Transverse colon (tissue), 4 donors: ENCODE measurements at regions of chr22 and their contacts with region 1.

Region 1: GRCh38 chr22:17903564-17904295 is 120.6 kb downstream of the MICAL3 start:
- DNase-seq: no peak
- H3K4me3 ChIP-seq: no peak overlapping the region
- H3K27ac ChIP-seq: peak overlapping the region; percentile 6 to 63 (median 26)
- H3K4me1 ChIP-seq: peaks cover 0 to 8% (median 3%) of the 10 kb centered on the region in 4 donors
- H3K27me3 ChIP-seq: no peaks in the 10 kb centered on the region
- CTCF ChIP-seq: peak in 1 of 5 experiments; percentile 27
- EP300 ChIP-seq: no peak
- POLR2A ChIP-seq: no peak

Region 2: GRCh38 chr22:17867160-17867785 is 36.5 kb before region 1 on chr22:
- in situ Hi-C with region 1: no loop called
- intact Hi-C with region 1: no loop called
- DNase-seq: peak; percentile 86
- H3K4me3 ChIP-seq: no peak overlapping the region
- H3K27ac ChIP-seq: peak overlapping the region; percentile 74 to 80 (median 77)
- H3K4me1 ChIP-seq: peaks cover 31 to 59% (median 44%) of the 10 kb centered on the region in 4 donors
- H3K27me3 ChIP-seq: no peaks in the 10 kb centered on the region
- CTCF ChIP-seq: peak in 4 of 5 experiments; percentile 18 to 68 (median 46)
- EP300 ChIP-seq: peak; percentile 40
- POLR2A ChIP-seq: no peak

Region 3: DNA sequence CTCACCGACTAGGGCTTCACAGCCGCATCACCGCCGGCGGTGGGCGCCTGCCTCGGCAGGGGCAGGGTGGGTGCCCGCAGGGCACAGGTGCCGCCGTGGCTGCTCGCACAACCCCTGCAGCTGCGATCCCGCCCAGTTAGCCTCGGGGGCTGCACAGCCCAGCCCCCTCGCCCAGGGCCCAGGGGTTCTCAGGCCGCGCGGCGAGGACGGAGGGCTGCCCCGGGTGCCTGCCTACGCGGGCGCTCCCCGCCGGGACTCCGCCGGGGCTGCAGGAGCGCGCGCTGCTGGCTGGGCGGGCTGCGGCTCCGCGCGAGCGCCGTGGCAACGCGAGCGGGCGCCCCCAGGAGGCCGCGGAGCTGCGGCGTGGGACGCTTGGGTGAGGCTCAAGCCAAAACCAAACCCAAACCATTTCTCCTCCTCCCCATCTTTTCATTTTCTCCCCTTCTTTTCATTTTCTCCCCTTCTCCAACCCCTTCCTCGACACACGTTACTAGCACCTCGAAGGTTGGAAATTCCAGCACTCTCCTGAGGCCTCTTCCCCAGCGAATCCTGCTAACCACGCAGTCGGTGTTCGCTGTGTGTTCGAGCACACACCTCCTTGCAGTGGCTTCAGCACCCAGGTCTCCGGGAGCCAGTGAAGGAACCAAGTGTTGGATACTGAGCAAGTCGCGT is 120.7 kb after region 1 on chr22 and contains the start of gene MICAL3:
- in situ Hi-C with region 1: no loop called
- intact Hi-C with region 1: loop called (anchors 10 kb)
- DNase-seq: peak; percentile 75
- H3K4me3 ChIP-seq: peak within 1 kb of the TSS; percentile 52 to 84 (median 66)
- H3K27ac ChIP-seq: peak within 1 kb of the TSS; percentile 78 to 91 (median 88)
- H3K4me1 ChIP-seq: peaks cover 17 to 23% (median 19%) of the 10 kb centered on the region in 4 donors
- H3K27me3 ChIP-seq: no peaks in the 10 kb centered on the region
- CTCF ChIP-seq: peak; percentile 15 to 56 (median 47)
- EP300 ChIP-seq: no peak
- POLR2A ChIP-seq: no peak
- total RNA-seq, gene MICAL3: 84.2 to 290 (median 151) TPM